ENCODE measurements at regions of chr2 and their contacts with region 1.

Region 1: DNA sequence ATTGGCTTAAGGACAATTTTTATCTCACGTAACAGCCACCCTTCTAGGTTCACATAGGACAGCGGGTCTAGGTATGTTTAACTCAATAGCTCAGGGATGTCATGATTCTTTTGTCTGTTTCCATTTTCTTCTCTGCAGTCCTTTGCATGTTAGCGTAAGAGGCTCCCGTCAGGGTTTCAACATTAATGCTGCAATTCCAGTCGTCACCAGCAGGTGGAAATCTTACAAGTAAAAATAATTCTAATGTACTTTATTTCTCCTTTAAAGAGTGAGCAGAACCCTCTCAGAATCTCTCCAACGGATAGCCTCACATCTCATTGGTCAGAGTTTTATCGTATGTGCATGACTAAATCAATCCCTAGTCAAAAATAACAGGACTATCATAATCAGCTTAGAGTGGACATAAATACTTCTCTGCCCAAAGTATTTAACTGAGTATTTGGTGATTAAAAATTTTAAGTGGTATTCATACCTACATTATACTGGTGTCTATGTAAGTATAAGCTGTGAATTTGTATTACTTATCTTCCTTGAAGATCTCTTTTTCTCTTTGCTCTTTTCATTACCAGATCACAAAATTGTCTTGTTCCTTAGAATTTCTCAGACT is 487.2 kb upstream of the GCFC2 start:
- DNase-seq: peak; percentile 11
- CTCF ChIP-seq: peak; percentile 72

Region 2: DNA sequence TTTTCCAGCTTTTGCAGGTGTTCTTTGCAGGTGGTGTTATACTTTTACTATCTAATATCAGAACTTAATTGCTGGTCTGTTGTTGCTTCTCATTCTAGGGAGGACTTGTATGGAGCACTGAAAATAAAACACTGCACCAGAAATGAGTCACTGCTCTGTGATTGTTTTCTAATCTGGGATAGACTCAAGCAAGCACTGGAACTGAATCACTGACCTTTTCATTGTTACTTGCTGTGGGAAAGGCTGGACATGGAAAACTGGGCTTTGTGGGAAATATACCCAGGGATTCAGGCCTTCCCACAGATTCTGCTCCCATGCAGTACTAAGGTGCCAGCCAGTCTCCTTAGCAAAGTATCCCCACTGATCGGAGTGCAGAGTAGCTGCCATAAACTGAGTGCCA is 17.3 kb before region 1 on chr2:
- CTCF ChIA-PET with region 1: interaction called, 23 read pairs
- POLR2A ChIA-PET with region 1: no interaction called
- DNase-seq: no peak
- CTCF ChIP-seq: no peak

Region 3: GRCh38 chr2:76211991-76212985 is 14.3 kb after region 1 on chr2:
- CTCF ChIA-PET with region 1: interaction called, 33 read pairs
- POLR2A ChIA-PET with region 1: no interaction called
- DNase-seq: no peak
- CTCF ChIP-seq: no peak

Measured in GM10248 (cell line).